Panc1 (cell line): ENCODE measurements at regions of chr12 and their contacts with region 1.

Region 1: DNA sequence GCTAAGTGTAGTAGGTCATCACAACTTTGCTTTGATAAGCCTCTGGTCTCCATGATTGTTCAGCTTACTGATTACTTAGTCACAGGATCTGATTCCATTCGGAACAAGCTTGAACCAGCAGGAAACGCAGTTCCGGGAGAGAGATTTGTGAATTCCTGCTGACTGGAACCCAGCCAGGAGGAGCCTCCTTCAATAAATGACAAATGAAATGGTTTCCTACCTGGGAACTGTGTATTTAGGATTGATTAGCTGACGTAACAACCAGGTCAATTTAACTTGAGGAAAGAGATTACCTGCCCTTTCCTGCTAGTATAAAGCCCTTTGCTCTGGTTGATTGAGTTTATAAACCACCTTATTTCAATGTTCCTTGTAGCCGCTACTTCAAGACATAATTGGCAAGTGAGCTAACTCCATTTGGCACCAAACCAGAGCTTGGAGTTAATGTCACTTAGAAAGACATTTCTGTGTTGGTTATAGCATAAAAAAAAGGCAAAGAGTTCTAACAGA is 35.1 kb upstream of the KCNH3 start:
- DNase-seq: no peak
- ATAC-seq: no peak
- H3K4me3 ChIP-seq: no peak overlapping the region
- H3K27ac ChIP-seq: no peak overlapping the region
- H3K4me1 ChIP-seq: no peaks in the 10 kb centered on the region
- H3K27me3 ChIP-seq: no peaks in the 10 kb centered on the region
- CTCF ChIP-seq: no peak

Region 2: GRCh38 chr12:49079793-49080192 is 423.9 kb before region 1 on chr12:
- CTCF ChIA-PET with region 1: interaction called, 11 read pairs
- POLR2A ChIA-PET with region 1: no interaction called
- in situ Hi-C with region 1: no loop called
- intact Hi-C with region 1: no loop called
- DNase-seq: no peak
- ATAC-seq: no peak
- H3K4me3 ChIP-seq: no peak overlapping the region
- H3K27ac ChIP-seq: no peak overlapping the region
- H3K4me1 ChIP-seq: no peaks in the 10 kb centered on the region
- H3K27me3 ChIP-seq: no peaks in the 10 kb centered on the region
- CTCF ChIP-seq: no peak

Region 3: GRCh38 chr12:49366652-49367380 is 136.9 kb before region 1 on chr12:
- CTCF ChIA-PET with region 1: no interaction called
- POLR2A ChIA-PET with region 1: interaction called, 3 read pairs
- in situ Hi-C with region 1: loop called (anchors 25 kb)
- intact Hi-C with region 1: no loop called
- DNase-seq: no peak
- ATAC-seq: peak; percentile 94
- H3K4me3 ChIP-seq: peak overlapping the region; percentile 78 to 82
- H3K27ac ChIP-seq: peak overlapping the region; percentile 92
- H3K4me1 ChIP-seq: peaks cover 18% of the 10 kb centered on the region
- H3K27me3 ChIP-seq: no peaks in the 10 kb centered on the region
- CTCF ChIP-seq: peak; percentile 44; the same call in 1 of the 2 replicates

Region 4: DNA sequence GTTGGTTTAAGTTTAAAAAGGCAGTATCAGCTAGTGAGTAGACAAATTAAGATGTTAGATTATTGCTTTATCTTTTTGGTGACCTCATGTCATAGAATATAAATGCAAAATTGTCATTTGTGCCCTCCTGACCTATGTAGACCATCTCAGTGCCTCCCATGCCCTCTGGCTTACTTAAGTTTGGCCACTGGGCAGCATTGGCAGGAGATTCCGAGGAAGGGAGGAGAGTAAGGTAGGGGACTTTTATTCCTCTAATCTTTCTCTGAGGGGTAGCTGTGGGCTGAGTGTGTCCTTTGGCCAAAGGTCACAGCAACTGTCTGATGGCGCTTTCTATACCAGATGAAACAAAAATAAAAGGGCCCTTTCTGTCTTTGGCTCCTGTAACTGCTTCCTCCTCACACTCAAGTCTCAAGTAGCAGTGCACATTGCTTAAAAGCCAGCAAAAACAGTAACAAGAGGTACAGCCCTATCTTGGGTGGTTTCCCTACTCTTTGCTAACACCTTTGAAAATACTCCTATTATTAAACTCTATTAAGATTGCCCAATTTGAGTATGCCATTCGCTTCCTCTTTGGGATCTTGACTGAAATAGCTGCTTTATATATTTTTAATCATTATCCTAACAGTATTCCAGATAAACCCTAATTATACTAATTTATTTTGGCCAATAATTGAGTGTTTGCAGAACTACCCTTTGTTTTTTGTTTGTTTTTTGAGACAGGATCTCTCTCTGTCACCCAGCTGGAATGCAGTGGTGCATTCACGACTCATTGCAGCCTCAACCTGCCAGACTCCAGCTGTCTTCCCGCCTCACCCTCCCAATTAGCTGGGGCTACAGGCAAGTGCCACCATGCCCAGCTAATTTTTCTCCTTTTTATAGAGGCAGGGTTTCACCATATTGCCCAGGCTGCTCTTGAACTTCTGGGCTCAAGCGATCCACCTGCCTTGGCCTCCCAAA is 21.4 kb before region 1 on chr12:
- CTCF ChIA-PET with region 1: no interaction called
- POLR2A ChIA-PET with region 1: no interaction called
- in situ Hi-C with region 1: no loop called
- intact Hi-C with region 1: no loop called
- DNase-seq: no peak
- ATAC-seq: peak; percentile 65; the same call in 1 of the 2 replicates
- H3K4me3 ChIP-seq: no peak overlapping the region
- H3K27ac ChIP-seq: no peak overlapping the region
- H3K4me1 ChIP-seq: peaks cover 7% of the 10 kb centered on the region
- H3K27me3 ChIP-seq: no peaks in the 10 kb centered on the region
- CTCF ChIP-seq: no peak

Region 5: GRCh38 chr12:49580572-49581535 is 77.1 kb after region 1 on chr12:
- CTCF ChIA-PET with region 1: no interaction called
- POLR2A ChIA-PET with region 1: no interaction called
- in situ Hi-C with region 1: no loop called
- intact Hi-C with region 1: no loop called
- DNase-seq: peak; percentile 27
- ATAC-seq: peak; percentile 96
- H3K4me3 ChIP-seq: no peak overlapping the region
- H3K27ac ChIP-seq: no peak overlapping the region
- H3K4me1 ChIP-seq: no peaks in the 10 kb centered on the region
- H3K27me3 ChIP-seq: no peaks in the 10 kb centered on the region
- CTCF ChIP-seq: peak; percentile 92